Colonic mucosa (tissue), 4 donors: ENCODE measurements at regions of chr11 and their contacts with region 1.

Region 1: GRCh38 chr11:109946322-109946846 is 146.8 kb upstream of the ZC3H12C start:
- DNase-seq: peak; percentile 90
- H3K4me3 ChIP-seq: peak overlapping the region; percentile 10
- H3K27ac ChIP-seq: no peak overlapping the region
- H3K4me1 ChIP-seq: no peaks in the 10 kb centered on the region
- H3K27me3 ChIP-seq: no peaks in the 10 kb centered on the region
- CTCF ChIP-seq: peak; percentile 86

Region 2: GRCh38 chr11:110092515-110093404 is 146.4 kb after region 1 on chr11 and contains the start of gene ZC3H12C:
- intact Hi-C with region 1: loop called (anchors 5 kb)
- DNase-seq: peak; percentile 88
- H3K4me3 ChIP-seq: peak within 1 kb of the TSS; percentile 62
- H3K27ac ChIP-seq: peak within 1 kb of the TSS; percentile 93
- H3K4me1 ChIP-seq: no peaks in the 10 kb centered on the region
- H3K27me3 ChIP-seq: no peaks in the 10 kb centered on the region
- CTCF ChIP-seq: no peak
- total RNA-seq, gene ZC3H12C: 9.2 to 18.8 TPM

Region 3: GRCh38 chr11:110195845-110196754 is 249.7 kb after region 1 on chr11:
- intact Hi-C with region 1: loop called (anchors 10 kb)
- DNase-seq: no peak
- H3K4me3 ChIP-seq: no peak overlapping the region
- H3K27ac ChIP-seq: no peak overlapping the region
- H3K4me1 ChIP-seq: no peaks in the 10 kb centered on the region
- H3K27me3 ChIP-seq: no peaks in the 10 kb centered on the region
- CTCF ChIP-seq: no peak

Region 4: DNA sequence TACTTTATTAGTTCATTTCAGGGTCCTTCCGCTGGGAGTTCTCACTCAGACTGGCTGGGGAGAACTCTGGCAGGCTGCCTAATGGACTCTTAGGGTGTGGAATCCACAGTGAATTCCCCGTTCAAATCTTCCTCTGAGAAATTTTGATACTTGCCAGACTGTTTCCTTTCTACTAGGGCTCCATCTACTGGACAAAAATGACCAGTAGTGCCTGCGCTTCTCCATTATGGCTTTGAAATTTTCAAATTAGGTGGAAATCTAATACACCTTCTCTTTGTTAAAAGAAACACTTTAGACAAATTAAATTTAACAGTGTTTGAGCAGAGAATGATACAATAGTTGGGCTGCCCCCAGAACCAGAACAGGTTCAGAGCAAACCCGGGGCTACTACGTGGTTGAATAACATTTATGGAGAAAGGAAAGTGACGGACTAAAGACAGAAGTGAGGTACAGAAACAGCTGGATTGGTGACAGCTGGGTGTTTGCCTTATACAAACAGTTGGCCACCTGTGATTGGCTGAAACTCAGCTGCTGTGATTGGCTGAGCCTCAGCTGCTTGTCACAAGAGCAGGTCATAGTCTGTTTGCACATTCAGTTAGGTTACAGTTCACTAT is 430.4 kb after region 1 on chr11:
- intact Hi-C with region 1: loop called (anchors 5 kb)
- DNase-seq: peak; percentile 71
- H3K4me3 ChIP-seq: no peak overlapping the region
- H3K27ac ChIP-seq: no peak overlapping the region
- H3K4me1 ChIP-seq: no peaks in the 10 kb centered on the region
- H3K27me3 ChIP-seq: no peaks in the 10 kb centered on the region
- CTCF ChIP-seq: peak; percentile 68

Region 5: GRCh38 chr11:111137846-111138245 is 1191.5 kb after region 1 on chr11:
- intact Hi-C with region 1: no loop called
- DNase-seq: no peak
- H3K4me3 ChIP-seq: no peak overlapping the region
- H3K27ac ChIP-seq: no peak overlapping the region
- H3K4me1 ChIP-seq: no peaks in the 10 kb centered on the region
- H3K27me3 ChIP-seq: no peaks in the 10 kb centered on the region
- CTCF ChIP-seq: no peak